Activated CD8-positive, alpha-beta T cell treated with anti-CD3 and anti-CD28 coated beads for 36 hours (primary cell): ENCODE measurements at regions of chr4 and their contacts with region 1.

Region 1: GRCh38 chr4:75673027-75673958 is at the start of gene G3BP2:
- DNase-seq: peak; percentile 99
- ATAC-seq: peak; percentile 93
- H3K4me3 Mint-ChIP-seq: peak within 1 kb of the TSS; percentile 95
- H3K27ac Mint-ChIP-seq: peak within 1 kb of the TSS; percentile 99
- H3K4me1 Mint-ChIP-seq: peaks cover 32% of the 10 kb centered on the region
- H3K27me3 Mint-ChIP-seq: no peaks in the 10 kb centered on the region
- CTCF ChIP-seq: no peak
- total RNA-seq, gene G3BP2: 185 to 197 TPM

Region 2: DNA sequence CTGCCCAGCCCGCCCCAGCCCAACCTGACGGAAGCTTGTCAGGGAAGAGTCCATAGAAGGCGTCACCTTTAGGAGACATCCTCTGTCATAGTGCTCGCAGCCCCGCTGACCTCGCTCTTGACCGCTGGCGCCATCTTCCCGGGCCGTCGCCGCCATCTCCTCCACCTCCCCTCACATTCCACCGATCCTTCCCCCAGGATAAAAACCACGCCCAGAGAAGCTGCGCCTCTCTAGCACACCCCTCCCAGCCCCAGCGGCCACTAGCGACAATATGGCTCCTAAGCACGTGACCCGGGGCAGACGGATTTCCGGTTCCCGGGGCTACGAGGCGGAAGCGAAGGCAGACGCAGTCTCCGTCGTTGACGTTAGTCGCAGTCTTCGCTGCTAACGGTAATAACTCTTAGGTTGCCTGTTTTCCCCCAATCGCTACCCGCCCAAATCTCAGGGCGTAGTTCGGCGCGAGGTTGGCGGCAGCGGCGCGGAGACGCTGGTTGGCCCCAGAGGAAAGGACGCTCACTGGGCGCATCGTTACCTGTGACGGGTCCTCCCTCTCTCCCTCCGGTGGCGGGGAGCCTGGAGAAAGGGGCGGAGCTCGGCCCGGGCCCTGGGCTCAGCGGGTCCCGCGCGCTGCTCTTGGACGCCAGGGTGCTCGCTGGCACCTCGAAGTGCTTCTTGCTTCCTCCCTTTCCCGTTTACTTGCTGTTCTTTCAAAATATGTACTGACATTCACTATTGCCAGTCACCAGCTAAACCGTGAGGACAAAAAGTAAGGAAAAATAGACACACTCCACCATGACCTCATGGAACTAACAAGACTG is 159.0 kb before region 1 on chr4 and contains the starts of genes RCHY1 and THAP6:
- CTCF ChIA-PET with region 1: no interaction called
- POLR2A ChIA-PET with region 1: interaction called, 3 read pairs
- intact Hi-C with region 1: loop called (anchors 1 kb)
- DNase-seq: peak; percentile 94
- ATAC-seq: peak; percentile 91
- H3K4me3 Mint-ChIP-seq: no peak within 1 kb of the TSS
- H3K27ac Mint-ChIP-seq: peak within 1 kb of the TSS; percentile 94
- H3K4me1 Mint-ChIP-seq: peaks cover 50% of the 10 kb centered on the region
- H3K27me3 Mint-ChIP-seq: no peaks in the 10 kb centered on the region
- CTCF ChIP-seq: no peak
- total RNA-seq, gene RCHY1: 33.1 to 33.3 TPM
- total RNA-seq, gene THAP6: 16.6 to 19.1 TPM

Region 3: GRCh38 chr4:75653845-75654503 is 19.3 kb before region 1 on chr4:
- CTCF ChIA-PET with region 1: interaction called, 10 read pairs
- POLR2A ChIA-PET with region 1: interaction called, 25 read pairs
- intact Hi-C with region 1: loop called (anchors 2 kb)
- DNase-seq: no peak
- ATAC-seq: peak; percentile 11
- H3K4me3 Mint-ChIP-seq: peak overlapping the region; percentile 50
- H3K27ac Mint-ChIP-seq: peak overlapping the region; percentile 96
- H3K4me1 Mint-ChIP-seq: peaks cover 59% of the 10 kb centered on the region
- H3K27me3 Mint-ChIP-seq: no peaks in the 10 kb centered on the region
- CTCF ChIP-seq: peak; percentile 20

Region 4: DNA sequence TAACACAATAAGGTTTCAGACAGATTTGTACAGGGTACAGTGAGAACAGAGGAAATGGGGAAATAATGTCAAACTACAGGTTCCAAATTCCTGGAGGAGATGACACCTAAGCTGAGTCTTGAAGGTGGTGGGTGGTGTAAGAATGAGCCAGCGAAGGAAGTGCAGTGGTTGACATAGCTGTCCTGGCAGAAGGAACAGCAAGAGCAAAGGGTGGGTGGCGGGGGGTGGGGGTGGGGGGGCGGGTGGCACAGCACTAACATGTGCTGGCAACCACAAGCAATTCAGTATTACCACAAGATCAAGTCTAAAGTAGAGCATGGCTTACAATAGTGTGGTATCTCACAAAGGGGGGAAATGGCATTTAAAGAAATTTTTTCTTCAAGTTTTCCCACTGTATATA is 13.1 kb after region 1 on chr4:
- CTCF ChIA-PET with region 1: interaction called, 4 read pairs
- POLR2A ChIA-PET with region 1: interaction called, 15 read pairs
- intact Hi-C with region 1: no loop called
- DNase-seq: peak; percentile 52
- ATAC-seq: peak; percentile 64
- H3K4me3 Mint-ChIP-seq: no peak overlapping the region
- H3K27ac Mint-ChIP-seq: peak overlapping the region; percentile 4
- H3K4me1 Mint-ChIP-seq: peaks cover 44% of the 10 kb centered on the region
- H3K27me3 Mint-ChIP-seq: no peaks in the 10 kb centered on the region
- CTCF ChIP-seq: no peak